Activated CD4-positive, alpha-beta T cell treated with anti-CD3 and anti-CD28 coated beads for 36 hours (primary cell): ENCODE measurements at regions of chr5 and their contacts with region 1.

Region 1: GRCh38 chr5:141369994-141370848 is at the start of gene PCDHGB3:
- DNase-seq: peak; percentile 63
- ATAC-seq: peak; percentile 76
- H3K4me3 Mint-ChIP-seq: peak within 1 kb of the TSS; percentile 52
- H3K27ac Mint-ChIP-seq: no peak within 1 kb of the TSS
- H3K4me1 Mint-ChIP-seq: peaks cover 3% of the 10 kb centered on the region
- H3K27me3 Mint-ChIP-seq: peaks cover 61% of the 10 kb centered on the region
- total RNA-seq, gene PCDHGB3: not detected

Region 2: GRCh38 chr5:140795259-140795641 is 575.0 kb before region 1 on chr5:
- CTCF ChIA-PET with region 1: no interaction called
- POLR2A ChIA-PET with region 1: no interaction called
- intact Hi-C with region 1: loop called (anchors 5 to 10 kb)
- DNase-seq: no peak
- ATAC-seq: no peak
- H3K4me3 Mint-ChIP-seq: no peak overlapping the region
- H3K27ac Mint-ChIP-seq: no peak overlapping the region
- H3K4me1 Mint-ChIP-seq: no peaks in the 10 kb centered on the region
- H3K27me3 Mint-ChIP-seq: peaks cover 29% of the 10 kb centered on the region

Region 3: GRCh38 chr5:141094481-141095262 is 275.5 kb before region 1 on chr5 and contains the start of gene PCDHB2:
- CTCF ChIA-PET with region 1: no interaction called
- POLR2A ChIA-PET with region 1: no interaction called
- intact Hi-C with region 1: no loop called
- DNase-seq: peak; percentile 17
- ATAC-seq: no peak
- H3K4me3 Mint-ChIP-seq: no peak within 1 kb of the TSS
- H3K27ac Mint-ChIP-seq: no peak within 1 kb of the TSS
- H3K4me1 Mint-ChIP-seq: no peaks in the 10 kb centered on the region
- H3K27me3 Mint-ChIP-seq: peaks cover 35% of the 10 kb centered on the region
- total RNA-seq, gene PCDHB2: not detected

Region 4: GRCh38 chr5:141245250-141245717 is 124.9 kb before region 1 on chr5 and contains the start of gene PCDHB15:
- CTCF ChIA-PET with region 1: interaction called, 10 read pairs
- POLR2A ChIA-PET with region 1: no interaction called
- intact Hi-C with region 1: loop called in 1 of 2 experiments (anchors 10 kb)
- DNase-seq: peak; percentile 48
- ATAC-seq: no peak
- H3K4me3 Mint-ChIP-seq: peak within 1 kb of the TSS; percentile 17
- H3K27ac Mint-ChIP-seq: no peak within 1 kb of the TSS
- H3K4me1 Mint-ChIP-seq: no peaks in the 10 kb centered on the region
- H3K27me3 Mint-ChIP-seq: peaks cover 35% of the 10 kb centered on the region
- total RNA-seq, gene PCDHB15: not detected

Region 5: DNA sequence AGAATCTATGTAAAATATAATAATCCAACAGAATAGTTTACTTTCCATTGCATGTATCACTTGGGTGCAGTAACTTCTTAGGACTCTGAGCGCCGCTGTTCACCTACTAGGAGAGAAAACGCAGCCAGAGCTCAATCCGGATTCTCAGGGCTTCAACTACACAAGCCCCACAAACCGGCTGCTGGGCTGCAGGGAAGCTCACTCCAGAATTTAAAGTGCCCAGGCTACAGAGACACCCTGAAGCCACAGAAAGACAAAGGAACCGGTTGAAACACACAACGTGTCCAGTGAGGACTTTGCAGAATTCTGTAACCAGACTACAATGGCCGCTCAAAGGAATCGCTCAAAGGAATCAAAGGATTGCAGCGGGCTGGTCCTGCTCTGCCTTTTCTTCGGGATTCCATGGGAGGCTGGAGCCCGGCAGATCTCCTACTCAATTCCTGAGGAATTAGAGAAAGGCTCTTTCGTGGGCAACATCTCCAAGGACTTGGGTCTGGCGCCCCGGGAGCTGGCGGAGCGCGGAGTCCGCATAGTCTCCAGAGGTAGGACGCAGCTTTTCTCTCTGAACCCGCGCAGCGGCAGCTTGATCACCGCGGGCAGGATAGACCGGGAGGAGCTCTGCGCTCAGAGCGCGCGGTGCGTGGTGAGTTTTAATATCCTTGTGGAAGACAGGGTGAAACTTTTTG is 42.8 kb after region 1 on chr5 and contains the start of gene PCDHGA10:
- CTCF ChIA-PET with region 1: interaction called, 15 read pairs
- POLR2A ChIA-PET with region 1: no interaction called
- intact Hi-C with region 1: loop called (anchors 5 kb)
- DNase-seq: peak; percentile 74
- ATAC-seq: peak; percentile 76
- H3K4me3 Mint-ChIP-seq: peak within 1 kb of the TSS; percentile 62
- H3K27ac Mint-ChIP-seq: no peak within 1 kb of the TSS
- H3K4me1 Mint-ChIP-seq: peaks cover 10% of the 10 kb centered on the region
- H3K27me3 Mint-ChIP-seq: peaks cover 63% of the 10 kb centered on the region
- total RNA-seq, gene PCDHGA10: 0.07 TPM in 1 of 2 experiments, not detected in the other